Mucosa of descending colon (tissue), 3 donors: ENCODE measurements at regions of chr1 and their contacts with region 1.

Region 1: DNA sequence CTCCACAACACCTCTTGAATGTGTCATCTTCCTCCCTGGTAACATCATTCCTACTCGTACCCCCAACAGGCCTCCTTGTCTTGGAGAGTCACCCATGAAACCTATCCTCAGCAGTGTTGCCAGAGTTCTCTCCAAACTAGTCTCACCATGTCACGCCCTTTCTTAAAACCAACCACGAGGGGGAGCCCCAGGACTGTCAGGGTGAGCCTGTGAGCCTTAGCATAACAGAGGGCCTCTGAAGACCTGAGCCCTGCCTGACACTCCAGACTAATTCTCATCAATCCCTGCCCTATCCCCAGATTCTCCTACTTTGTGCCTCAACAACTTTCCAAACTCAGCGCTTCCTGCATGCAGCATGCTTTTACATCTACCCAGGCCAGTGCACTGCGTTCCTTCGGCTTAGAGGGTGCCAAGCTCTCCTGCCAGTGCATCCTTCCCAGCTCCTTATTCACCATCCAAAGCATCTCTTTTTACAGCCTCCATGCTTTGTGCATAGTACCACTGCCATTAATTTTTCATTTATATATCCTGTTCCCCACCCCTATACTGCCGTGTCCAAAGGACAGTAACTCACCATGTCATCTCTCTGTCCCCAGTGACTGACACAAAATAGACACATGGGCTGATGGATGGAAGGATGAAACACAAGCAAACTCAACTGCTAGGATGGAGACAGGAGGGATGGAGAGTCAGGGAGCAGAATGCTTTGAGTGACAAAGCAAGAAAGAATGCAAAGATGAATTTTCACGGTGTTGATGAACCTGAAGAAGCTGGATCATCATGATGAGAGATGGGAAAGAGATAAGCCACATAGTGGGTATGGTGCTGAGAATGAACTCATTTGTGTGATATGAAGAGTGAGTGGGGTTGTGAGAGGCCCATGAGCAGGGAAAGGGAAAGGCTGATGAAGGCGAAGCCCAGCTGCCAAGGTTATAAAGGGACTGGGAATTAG is 34.0 kb downstream of the ZNF697 start:
- DNase-seq: peak; percentile 60 to 91 (median 85)
- ATAC-seq: peak; percentile 89
- H3K4me3 ChIP-seq: no peak overlapping the region
- H3K4me1 ChIP-seq: peaks cover 4% of the 10 kb centered on the region
- CTCF ChIP-seq: peak; percentile 58

Region 2: GRCh38 chr1:119565131-119565772 is 48.8 kb before region 1 on chr1:
- intact Hi-C with region 1: no loop called
- DNase-seq: no peak
- ATAC-seq: peak; percentile 76
- H3K4me3 ChIP-seq: no peak overlapping the region
- H3K4me1 ChIP-seq: peaks cover 3% of the 10 kb centered on the region
- CTCF ChIP-seq: no peak

Region 3: DNA sequence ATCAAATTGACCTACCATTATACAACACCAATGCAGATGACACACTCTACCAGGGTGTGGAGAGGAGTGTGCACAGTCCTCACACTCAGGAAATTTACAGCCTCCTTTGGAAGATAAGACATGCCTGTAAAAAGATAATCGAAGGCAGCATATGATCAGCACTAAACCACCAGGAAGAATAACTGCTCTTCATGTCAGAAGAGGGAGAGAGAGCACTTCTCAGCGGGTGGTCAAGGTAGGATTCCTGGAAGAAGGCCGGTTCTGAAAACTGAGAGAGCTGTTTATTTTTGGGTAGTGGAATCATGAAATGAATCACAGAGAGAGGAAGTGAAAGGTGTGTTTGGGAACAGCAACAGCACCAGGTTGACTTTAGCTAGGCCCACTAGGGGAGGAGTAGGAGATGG is 48.0 kb after region 1 on chr1:
- intact Hi-C with region 1: loop called (anchors 5 kb)
- DNase-seq: peak in 1 of 3 donors; percentile 48
- ATAC-seq: peak; percentile 87
- H3K4me3 ChIP-seq: no peak overlapping the region
- H3K4me1 ChIP-seq: peaks cover 40% of the 10 kb centered on the region
- CTCF ChIP-seq: no peak

Region 4: DNA sequence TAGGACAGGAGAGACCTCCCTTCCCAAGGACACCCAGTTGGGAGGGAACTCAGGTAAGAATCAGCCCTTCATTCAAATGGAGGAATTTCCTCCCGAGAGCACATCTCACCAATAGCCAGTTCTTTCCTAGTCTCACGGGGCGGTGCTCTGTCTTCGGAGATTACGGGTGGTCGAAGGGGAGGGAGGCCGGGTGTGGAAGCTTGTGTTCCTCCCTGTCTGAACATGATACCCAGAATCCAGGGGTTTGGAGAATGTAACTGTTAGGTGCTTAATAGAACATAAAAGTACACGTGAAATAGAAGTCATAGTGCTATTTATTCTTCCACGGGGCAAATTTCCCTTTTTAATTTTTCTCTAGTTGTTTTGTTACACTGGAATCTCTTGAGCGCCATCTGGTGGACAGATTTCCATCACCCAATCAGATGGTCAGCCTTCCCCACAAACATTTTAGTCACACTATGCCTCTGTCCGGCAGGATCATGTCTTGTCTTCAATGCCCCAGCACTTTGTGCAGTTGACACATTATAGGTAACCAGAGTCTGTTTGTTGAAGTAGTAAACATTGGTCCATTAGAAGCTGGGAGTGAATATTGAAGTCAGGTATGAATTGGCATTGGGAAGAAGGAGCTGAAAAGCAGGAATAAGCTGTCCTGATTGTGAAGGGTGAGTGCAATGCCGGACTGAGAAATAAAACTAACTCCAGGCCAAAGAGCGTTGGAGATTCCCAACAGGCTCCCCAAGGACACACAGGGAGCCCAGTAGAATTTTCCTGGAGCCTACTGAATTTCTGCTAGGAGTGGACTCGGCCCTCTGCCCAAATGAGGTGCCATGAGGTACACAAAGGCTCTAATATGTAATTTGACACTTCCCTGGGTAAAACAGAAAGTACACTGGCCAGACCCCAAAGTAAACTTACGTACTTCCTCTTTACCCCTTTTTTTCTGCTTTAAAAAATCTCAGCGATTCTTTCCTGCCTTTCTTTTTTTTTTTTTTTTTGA is 61.6 kb after region 1 on chr1:
- intact Hi-C with region 1: loop called in 1 of 2 experiments (anchors 2 kb)
- DNase-seq: peak in 2 of 3 donors; percentile 33 to 98
- ATAC-seq: peak; percentile 82
- H3K4me3 ChIP-seq: no peak overlapping the region
- H3K4me1 ChIP-seq: no peaks in the 10 kb centered on the region
- CTCF ChIP-seq: peak; percentile 74